ENCODE measurements at regions of chr19 and their contacts with region 1.

Region 1: GRCh38 chr19:39127812-39128515 is 2.4 kb downstream of the PAK4 start:
- DNase-seq: no peak

Region 2: GRCh38 chr19:39142630-39143029 is 14.7 kb after region 1 on chr19:
- intact Hi-C with region 1: loop called in 1 of 2 experiments (anchors 1 kb)
- DNase-seq: no peak

Region 3: DNA sequence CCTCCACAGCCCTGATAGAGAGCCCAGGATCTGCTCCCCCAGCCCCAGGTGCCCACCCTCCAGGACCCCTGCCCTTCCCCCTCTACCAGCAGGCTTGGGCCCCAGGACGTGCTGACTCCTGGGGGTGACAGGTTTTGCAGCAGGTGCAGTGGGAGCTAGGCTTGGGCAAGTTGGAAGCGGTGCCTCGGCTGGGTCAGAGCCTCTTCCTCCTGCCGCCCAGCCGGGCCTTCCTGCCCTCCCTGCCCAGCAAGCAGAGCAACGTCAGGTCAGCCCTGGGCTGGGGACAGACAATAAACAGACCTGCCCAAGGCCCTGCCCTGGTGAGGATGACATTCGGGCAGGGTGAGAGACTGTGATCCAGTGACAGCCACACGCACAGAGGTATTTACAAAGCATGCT is 59.6 kb after region 1 on chr19:
- intact Hi-C with region 1: loop called (anchors 5 kb)
- DNase-seq: peak; percentile 55

Region 4: DNA sequence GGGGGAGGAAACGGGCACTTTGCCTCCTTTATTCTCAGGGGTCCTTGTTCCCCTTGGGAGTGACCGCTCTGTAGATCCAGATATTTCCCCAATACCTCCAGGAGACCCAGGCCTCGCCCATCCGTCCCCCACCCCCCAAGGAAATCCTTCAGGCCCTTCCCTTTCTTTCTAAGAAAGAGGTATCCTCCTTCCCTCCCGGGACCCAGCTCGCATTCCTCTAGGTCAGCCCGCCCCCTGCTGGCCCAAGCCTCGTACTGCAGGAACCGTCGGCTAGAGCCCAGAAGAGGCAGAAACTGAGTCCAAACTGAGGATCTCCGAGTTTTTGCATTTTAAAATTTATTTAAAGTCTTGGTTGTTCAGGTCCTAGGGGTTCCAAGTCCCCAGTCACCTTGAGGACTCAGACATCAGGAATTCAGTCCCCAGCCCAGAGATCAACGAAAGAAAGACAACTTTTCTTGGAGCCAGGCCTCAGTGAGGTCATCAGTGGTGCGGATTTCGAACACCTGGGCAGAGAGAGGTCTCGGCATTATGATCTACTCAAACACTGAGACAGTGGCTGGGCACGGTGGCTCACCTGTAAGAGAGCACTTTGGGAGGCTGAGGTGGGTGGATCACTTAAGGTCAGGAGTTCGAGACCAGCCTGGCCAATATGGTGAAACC is 200.2 kb after region 1 on chr19:
- intact Hi-C with region 1: loop called (anchors 5 kb)
- DNase-seq: peak; percentile 96

Region 5: DNA sequence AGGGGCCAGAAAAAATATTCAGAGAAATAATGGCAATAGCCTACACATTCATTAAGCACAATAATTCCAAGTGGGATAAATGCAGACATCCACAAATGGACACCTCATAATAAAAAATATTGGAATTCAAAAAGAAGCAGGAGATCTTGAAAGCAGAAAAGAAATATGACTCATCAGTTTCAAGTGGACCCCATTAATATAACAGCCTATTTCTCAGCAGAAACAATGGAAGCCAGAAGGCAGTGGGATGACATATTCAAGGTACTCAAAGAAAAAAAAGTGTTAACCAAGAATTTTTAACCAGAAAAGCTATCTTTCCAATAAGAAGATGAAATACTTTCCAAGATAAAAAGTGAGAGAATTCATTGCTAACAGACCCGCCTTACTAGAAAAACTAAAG is 1911.8 kb after region 1 on chr19:
- intact Hi-C with region 1: loop called in 1 of 2 experiments (anchors 5 kb)
- DNase-seq: no peak